Left lung (tissue), 14 donors: ENCODE measurements at regions of chr1 and their contacts with region 1.

Region 1: GRCh38 chr1:26602378-26602959 is 72.9 kb downstream of the RPS6KA1 start:
- DNase-seq: peak in 2 of 4 donors; percentile 75 to 81
- ATAC-seq: peak; percentile 84
- H3K4me3 ChIP-seq: no peak overlapping the region
- H3K27ac ChIP-seq: no peak overlapping the region
- H3K4me1 ChIP-seq: peaks cover 4 to 16% of the 10 kb centered on the region in 2 donors
- H3K27me3 ChIP-seq: no peaks in the 10 kb centered on the region
- CTCF ChIP-seq: peak; percentile 84 to 88

Region 2: DNA sequence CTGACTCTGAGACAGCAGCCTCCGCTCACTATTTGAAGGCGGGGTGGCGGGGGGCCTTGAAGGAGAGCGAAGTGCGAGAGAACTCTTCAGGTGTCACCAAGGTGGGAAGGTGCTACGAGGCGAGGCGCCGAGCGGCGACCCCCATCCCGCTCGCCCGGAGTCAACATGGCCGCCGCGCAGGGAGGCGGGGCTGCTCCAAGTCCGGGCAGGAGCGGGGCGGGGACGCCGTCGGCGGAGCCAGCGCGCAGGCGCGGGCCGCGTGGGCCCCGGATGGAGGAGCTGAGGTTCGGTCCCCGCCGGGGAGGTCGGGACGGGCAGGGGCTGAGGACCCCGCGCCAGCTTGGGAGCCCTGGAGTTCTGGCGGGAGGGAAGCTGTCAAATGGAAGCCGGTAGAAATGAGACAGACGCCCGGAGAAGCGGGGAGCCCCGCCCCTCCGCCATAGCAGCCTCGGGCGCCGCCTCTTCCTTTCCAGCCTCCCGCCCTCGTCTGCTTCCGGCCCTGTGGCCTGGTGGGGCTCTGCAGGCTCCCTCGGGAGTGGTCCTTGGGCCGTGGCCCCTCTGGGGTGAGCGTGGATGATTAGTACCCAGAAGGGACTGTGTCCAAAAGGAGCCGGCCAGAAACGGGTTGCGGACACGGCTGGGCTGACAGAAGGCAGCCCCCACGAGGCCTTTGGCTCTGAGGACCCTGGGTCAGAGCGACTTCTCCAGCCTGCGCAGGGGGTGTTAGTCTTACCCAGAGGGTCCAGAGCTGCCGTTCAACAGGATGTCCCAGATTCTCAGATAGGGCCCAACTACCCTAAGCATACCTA is 185.4 kb after region 1 on chr1 and contains the start of gene PIGV:
- intact Hi-C with region 1: loop called in 1 of 2 experiments (anchors 5 kb)
- DNase-seq: peak; percentile 88 to 96 (median 94)
- ATAC-seq: peak; percentile 86
- H3K4me3 ChIP-seq: peak within 1 kb of the TSS; percentile 65 to 82
- H3K27ac ChIP-seq: peak within 1 kb of the TSS; percentile 99 to 100
- H3K4me1 ChIP-seq: peaks cover 32 to 62% of the 10 kb centered on the region in 2 donors
- H3K27me3 ChIP-seq: no peaks in the 10 kb centered on the region
- CTCF ChIP-seq: peak in 1 of 2 donors; percentile 56
- polyA plus RNA-seq, gene PIGV: 14.5 to 18.0 (median 16.0) TPM

Region 3: DNA sequence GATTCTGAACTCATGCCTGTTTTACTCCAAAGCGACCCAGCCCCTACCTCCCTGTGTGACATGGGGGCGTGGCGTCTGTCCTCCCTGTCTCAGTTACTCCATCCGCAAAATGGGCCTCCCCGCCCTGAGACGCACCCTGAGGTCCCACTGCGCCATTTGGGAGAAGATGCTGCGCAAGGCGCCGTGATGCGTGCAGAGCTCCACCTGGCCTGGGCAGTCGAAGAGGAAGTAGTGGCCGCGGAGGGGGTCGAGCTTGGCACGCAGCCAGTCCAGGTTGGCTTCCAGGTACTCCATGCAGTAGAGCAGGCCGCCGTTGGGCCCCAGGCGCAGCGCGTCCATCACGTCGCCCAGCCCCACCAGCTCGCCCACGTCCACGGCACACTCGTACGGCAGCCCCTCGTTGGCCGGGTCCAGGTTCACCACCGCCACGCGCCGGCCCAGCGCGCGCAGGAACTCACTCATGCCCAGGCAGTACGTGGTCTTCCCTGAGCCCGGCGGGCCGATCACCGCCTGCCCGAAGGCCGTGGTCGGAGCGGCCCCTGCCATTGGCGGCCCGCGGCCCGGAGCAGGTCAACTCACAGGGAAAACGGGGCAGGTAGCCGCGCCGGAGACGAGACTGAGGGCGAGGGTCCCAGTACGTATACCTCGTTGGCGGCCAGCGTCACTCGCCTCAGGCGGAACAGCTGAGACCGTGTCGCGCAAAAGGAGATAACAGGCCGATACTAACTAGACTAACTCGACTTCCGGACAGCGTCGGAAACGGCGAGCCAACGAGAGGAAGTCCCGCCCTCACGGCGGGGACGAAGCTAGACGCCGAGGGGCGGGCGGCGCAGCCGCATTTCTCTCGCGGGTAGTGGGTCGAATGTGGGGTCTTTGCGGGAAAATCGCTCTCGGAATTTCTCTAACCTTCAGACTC is 287.3 kb after region 1 on chr1 and contains the start of gene GPN2:
- intact Hi-C with region 1: loop called in 1 of 2 experiments (anchors 10 kb)
- DNase-seq: peak; percentile 83 to 94 (median 88)
- ATAC-seq: peak; percentile 97
- H3K4me3 ChIP-seq: peak within 1 kb of the TSS; percentile 75 to 91
- H3K27ac ChIP-seq: peak within 1 kb of the TSS; percentile 77 to 95
- H3K4me1 ChIP-seq: peaks cover 9 to 21% of the 10 kb centered on the region in 2 donors
- H3K27me3 ChIP-seq: no peaks in the 10 kb centered on the region
- CTCF ChIP-seq: no peak
- polyA plus RNA-seq, gene GPN2: 27.7 to 34.1 (median 31.6) TPM

Region 4: DNA sequence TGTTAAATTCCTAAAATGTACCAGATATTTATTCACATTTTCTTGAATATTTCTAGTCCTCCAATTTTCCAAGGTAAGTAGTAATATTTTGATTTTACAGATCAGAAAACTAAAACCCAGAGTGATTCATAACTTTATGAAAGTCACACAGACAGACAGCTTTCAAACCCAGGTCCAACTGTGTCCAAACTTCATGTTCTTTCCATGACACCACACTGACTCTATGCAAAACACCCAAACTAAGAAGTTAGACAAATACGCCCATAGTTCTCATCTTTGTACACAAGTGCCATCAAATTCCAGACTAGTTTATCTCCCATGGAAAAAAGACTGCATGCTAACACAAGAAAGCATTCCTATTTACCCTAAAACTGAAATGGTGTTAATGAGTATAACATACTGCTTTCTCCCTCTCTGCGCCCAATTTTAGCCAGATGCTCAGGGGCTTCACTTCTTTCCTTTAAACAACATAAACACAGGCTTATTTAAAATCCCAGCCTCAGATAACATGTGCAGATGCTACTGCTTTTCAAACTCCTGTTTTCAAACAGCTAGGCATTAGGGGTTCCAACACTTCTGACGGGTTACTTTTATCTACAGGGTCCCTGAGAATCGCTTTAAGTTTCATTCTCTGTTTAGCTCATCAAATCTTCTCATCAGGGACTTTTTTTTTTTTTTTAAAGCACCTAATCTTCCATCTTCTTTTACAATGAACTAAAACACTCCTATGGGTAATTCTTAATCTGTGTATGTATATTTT is 842.9 kb after region 1 on chr1:
- intact Hi-C with region 1: no loop called
- DNase-seq: no peak
- ATAC-seq: no peak
- H3K4me3 ChIP-seq: no peak overlapping the region
- H3K27ac ChIP-seq: no peak overlapping the region
- H3K4me1 ChIP-seq: peaks cover 0 to 25% of the 10 kb centered on the region in 2 donors
- H3K27me3 ChIP-seq: no peaks in the 10 kb centered on the region
- CTCF ChIP-seq: no peak